Stomach (tissue), 19 donors: ENCODE measurements at regions of chr1 and their contacts with region 1.

Region 1: GRCh38 chr1:24754229-24754628 is 9.0 kb downstream of the CLIC4 start:
- DNase-seq: no peak
- H3K4me3 ChIP-seq: no peak overlapping the region
- H3K27ac ChIP-seq: peak overlapping the region in 4 of 5 donors; percentile 22 to 99 (median 54)
- H3K4me1 ChIP-seq: peaks cover 22 to 76% (median 47%) of the 10 kb centered on the region in 4 donors
- H3K27me3 ChIP-seq: no peaks in the 10 kb centered on the region
- CTCF ChIP-seq: no peak
- EP300 ChIP-seq: no peak
- POLR2A ChIP-seq: no peak

Region 2: DNA sequence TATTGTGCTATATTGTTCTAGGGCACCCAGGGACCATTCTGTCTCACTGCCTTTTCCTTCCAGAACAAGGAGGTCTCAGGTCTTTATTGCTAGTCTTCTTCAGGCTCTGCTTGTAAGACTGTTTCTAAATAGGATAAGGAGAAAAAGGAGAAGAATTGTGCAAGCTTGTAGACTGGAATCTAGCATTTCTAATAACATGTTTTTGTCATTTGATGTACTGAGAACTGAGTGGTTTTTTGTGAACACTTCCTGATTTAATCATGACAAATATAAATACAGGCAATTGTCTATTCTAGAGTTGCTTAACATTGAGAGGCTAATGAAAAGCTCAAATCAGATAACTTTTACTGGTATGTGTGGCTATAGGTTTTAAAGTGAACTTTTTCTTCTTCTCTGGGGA is 68.7 kb after region 1 on chr1:
- intact Hi-C with region 1: loop called (anchors 10 kb)
- DNase-seq: no peak
- H3K4me3 ChIP-seq: no peak overlapping the region
- H3K27ac ChIP-seq: peak overlapping the region in 1 of 5 donors; percentile 14
- H3K4me1 ChIP-seq: peaks cover 0 to 53% (median 26%) of the 10 kb centered on the region in 4 donors
- H3K27me3 ChIP-seq: no peaks in the 10 kb centered on the region
- CTCF ChIP-seq: no peak
- EP300 ChIP-seq: no peak
- POLR2A ChIP-seq: no peak